ENCODE measurements at regions of chr9 and their contacts with region 1.

Region 1: DNA sequence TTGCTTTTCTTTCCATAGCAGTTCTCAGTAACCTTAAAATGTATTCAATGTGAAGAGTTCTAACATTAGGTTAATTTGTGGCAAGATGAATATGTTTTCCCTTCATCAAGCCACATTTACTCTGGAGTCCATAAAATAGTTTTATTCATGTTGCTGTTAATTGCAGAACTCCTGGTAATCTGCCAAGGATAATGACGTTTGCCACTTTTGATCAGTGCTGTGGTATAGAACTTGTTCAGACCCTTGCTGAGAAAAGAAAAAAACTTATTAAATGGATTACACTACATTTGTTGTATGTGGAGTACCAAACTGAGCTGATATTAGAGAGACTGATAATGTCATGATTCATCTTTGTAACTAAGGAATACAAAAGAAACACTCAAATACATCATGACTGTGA is 212.4 kb upstream of the DMAC1 start:
- DNase-seq: no peak
- H3K4me3 ChIP-seq: no peak overlapping the region
- H3K27ac ChIP-seq: no peak overlapping the region
- H3K4me1 ChIP-seq: no peaks in the 10 kb centered on the region
- CTCF ChIP-seq: no peak

Region 2: DNA sequence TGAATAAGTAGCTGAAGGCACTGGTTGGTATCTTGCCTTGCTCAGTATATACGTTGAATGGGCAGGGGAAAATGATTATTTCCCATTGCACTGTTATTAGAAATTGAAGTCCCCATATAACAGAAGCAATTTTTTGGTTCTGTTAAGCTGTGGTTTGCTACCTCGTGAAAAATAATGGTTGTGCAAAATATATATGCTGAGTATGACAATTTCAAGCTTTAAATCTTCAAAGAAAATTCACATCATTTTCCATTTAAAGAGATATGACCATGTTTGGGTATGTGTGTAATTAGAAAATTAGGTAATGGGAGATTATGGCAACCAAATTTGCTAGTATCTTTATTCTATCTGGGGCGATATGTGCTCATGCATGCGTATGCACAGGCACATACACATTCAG is 352.2 kb before region 1 on chr9:
- CTCF ChIA-PET with region 1: no interaction called
- POLR2A ChIA-PET with region 1: no interaction called
- intact Hi-C with region 1: loop called (anchors 5 kb)
- DNase-seq: no peak
- H3K4me3 ChIP-seq: no peak overlapping the region
- H3K27ac ChIP-seq: no peak overlapping the region
- H3K4me1 ChIP-seq: no peaks in the 10 kb centered on the region
- CTCF ChIP-seq: no peak